B cell (primary cell): ENCODE measurements at regions of chr5 and their contacts with region 1.

Region 1: GRCh38 chr5:139422307-139422893 is 16.9 kb downstream of the DNAJC18 start:
- DNase-seq: peak; percentile 80
- ATAC-seq: peak; percentile 95
- H3K4me3 ChIP-seq: no peak overlapping the region
- H3K4me3 Mint-ChIP-seq: no peak overlapping the region
- H3K27ac ChIP-seq: no peak overlapping the region
- H3K27ac Mint-ChIP-seq: peak overlapping the region; percentile 38
- H3K4me1 ChIP-seq: no peaks in the 10 kb centered on the region
- H3K4me1 Mint-ChIP-seq: peaks cover 2% of the 10 kb centered on the region
- H3K27me3 ChIP-seq: no peaks in the 10 kb centered on the region
- H3K27me3 Mint-ChIP-seq: no peaks in the 10 kb centered on the region
- CTCF ChIP-seq: peak; percentile 88

Region 2: DNA sequence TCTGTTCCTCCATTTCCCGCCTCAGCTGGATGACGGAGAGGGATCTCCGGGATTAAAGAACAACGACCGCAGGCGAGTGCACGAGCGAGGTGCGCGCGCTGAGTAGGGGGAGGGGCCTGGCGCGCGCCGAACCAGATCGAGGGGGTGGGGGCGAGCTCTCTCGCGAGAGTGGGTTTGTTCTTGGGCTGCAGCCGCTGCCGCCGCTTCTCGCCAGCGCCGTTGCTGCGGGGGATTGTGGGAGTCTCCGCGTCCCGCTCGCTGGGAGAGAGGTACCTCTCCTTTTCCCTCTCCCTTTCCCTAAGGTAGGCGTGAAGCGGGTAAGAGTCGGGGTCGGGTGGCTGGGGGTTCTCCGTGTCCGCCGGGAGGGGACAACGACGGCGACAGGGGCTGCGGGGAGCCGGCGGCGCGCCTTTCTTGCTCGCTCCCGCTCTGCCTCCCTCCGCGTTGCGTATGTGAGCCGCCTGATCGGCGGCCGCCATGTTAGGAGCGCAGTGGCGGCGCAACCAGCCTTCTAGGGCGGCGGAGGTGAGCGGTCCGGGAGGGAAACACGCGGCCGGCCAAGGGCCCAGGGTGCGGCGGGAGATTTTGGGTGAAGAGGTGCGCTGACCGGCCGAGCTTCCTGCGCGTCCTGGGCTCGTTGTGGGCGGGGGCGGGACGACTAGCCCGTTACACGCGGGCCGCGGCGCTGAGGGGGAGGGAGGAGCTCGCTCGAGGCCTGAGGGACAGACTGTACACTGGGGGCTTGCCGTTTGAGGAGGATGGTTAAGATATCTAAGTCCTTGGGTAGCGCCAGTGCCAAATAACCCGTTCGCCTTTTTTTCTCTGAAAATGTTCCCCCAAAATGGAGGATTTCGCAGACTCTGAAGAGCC is 128.7 kb before region 1 on chr5 and contains the start of gene MATR3:
- CTCF ChIA-PET with region 1: interaction called, 10 read pairs
- POLR2A ChIA-PET with region 1: interaction called, 13 read pairs
- intact Hi-C with region 1: no loop called
- DNase-seq: peak; percentile 96
- ATAC-seq: peak; percentile 87
- H3K4me3 ChIP-seq: peak within 1 kb of the TSS; percentile 81 to 97 (median 87)
- H3K4me3 Mint-ChIP-seq: peak within 1 kb of the TSS; percentile 98
- H3K27ac ChIP-seq: peak within 1 kb of the TSS; percentile 94 to 99
- H3K27ac Mint-ChIP-seq: peak within 1 kb of the TSS; percentile 99
- H3K4me1 ChIP-seq: peaks cover 35 to 39% of the 10 kb centered on the region in 2 donors
- H3K4me1 Mint-ChIP-seq: peaks cover 44% of the 10 kb centered on the region
- H3K27me3 ChIP-seq: no peaks in the 10 kb centered on the region
- H3K27me3 Mint-ChIP-seq: no peaks in the 10 kb centered on the region
- CTCF ChIP-seq: no peak
- total RNA-seq, gene MATR3: 243 and 271 TPM in 2 replicates

Region 3: GRCh38 chr5:139439013-139439903 is 16.9 kb after region 1 on chr5 and contains the start of gene DNAJC18:
- CTCF ChIA-PET with region 1: interaction called, 7 read pairs
- POLR2A ChIA-PET with region 1: no interaction called
- intact Hi-C with region 1: loop called (anchors 2 kb)
- DNase-seq: peak; percentile 93
- ATAC-seq: peak; percentile 94
- H3K4me3 ChIP-seq: peak within 1 kb of the TSS; percentile 53 to 97 (median 91)
- H3K4me3 Mint-ChIP-seq: peak within 1 kb of the TSS; percentile 97
- H3K27ac ChIP-seq: peak within 1 kb of the TSS; percentile 98 to 100
- H3K27ac Mint-ChIP-seq: peak within 1 kb of the TSS; percentile 99
- H3K4me1 ChIP-seq: peaks cover 11 to 12% of the 10 kb centered on the region in 2 donors
- H3K4me1 Mint-ChIP-seq: peaks cover 16% of the 10 kb centered on the region
- H3K27me3 ChIP-seq: no peaks in the 10 kb centered on the region
- H3K27me3 Mint-ChIP-seq: peaks cover 3% of the 10 kb centered on the region
- CTCF ChIP-seq: no peak
- total RNA-seq, gene DNAJC18: 13.6 and 16.5 TPM in 2 replicates

Region 4: DNA sequence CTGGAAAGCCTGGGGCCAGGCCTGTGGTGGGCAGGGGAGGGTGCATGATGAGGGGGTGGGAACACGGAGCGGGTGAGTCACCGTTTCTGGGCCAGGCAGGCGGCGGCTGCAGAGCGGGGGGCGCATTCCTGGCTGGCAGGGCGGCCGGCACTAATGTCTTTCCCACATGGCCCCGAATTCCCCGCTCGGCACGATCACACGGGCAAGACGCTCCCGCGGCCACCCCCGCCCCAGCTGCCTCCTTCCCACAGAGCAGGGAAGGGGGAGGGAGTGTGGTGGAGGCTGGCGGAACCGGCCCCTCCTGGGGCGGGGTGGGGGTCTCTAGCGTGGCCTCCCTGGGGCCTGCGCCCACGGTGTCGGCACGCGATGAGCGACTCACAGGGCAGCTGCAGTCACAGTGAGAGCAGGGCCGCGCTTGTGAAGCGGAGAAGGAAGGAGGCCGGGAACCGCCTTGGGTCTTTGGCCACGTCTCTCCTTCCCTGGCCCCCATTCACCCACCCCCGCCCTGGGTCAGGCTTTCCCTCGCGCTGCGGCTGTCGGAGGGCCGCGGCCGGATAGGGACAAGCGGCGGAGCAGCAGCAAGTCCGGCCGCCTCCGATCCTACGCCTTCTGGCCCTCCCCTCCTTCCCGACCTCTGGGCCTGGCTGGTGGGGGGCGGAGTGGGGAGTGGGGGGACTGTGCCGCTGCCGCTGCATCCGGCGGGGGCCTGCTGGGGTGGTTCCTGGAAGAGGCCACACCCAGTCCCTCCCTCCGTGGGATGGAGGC is 274.7 kb after region 1 on chr5:
- CTCF ChIA-PET with region 1: interaction called, 3 read pairs
- POLR2A ChIA-PET with region 1: no interaction called
- intact Hi-C with region 1: loop called (anchors 5 kb)
- DNase-seq: peak; percentile 55
- ATAC-seq: peak; percentile 34
- H3K4me3 ChIP-seq: peak overlapping the region in 4 of 5 experiments; percentile 33 to 56 (median 45)
- H3K4me3 Mint-ChIP-seq: peak overlapping the region; percentile 82
- H3K27ac ChIP-seq: no peak overlapping the region
- H3K27ac Mint-ChIP-seq: peak overlapping the region; percentile 72
- H3K4me1 ChIP-seq: peaks cover 41 to 48% of the 10 kb centered on the region in 2 donors
- H3K4me1 Mint-ChIP-seq: peaks cover 45% of the 10 kb centered on the region
- H3K27me3 ChIP-seq: peaks cover 0 to 35% (median 10%) of the 10 kb centered on the region in 4 experiments
- H3K27me3 Mint-ChIP-seq: peaks cover 17% of the 10 kb centered on the region
- CTCF ChIP-seq: no peak

Region 5: GRCh38 chr5:139844472-139845145 is 422.2 kb after region 1 on chr5:
- CTCF ChIA-PET with region 1: interaction called, 5 read pairs
- POLR2A ChIA-PET with region 1: no interaction called
- intact Hi-C with region 1: loop called (anchors 2 kb)
- DNase-seq: peak; percentile 83
- ATAC-seq: peak; percentile 26
- H3K4me3 ChIP-seq: no peak overlapping the region
- H3K4me3 Mint-ChIP-seq: peak overlapping the region; percentile 17
- H3K27ac ChIP-seq: no peak overlapping the region
- H3K27ac Mint-ChIP-seq: peak overlapping the region; percentile 64
- H3K4me1 ChIP-seq: peaks cover 8 to 16% of the 10 kb centered on the region in 2 donors
- H3K4me1 Mint-ChIP-seq: peaks cover 15% of the 10 kb centered on the region
- H3K27me3 ChIP-seq: peaks cover 0 to 36% (median 18%) of the 10 kb centered on the region in 4 experiments
- H3K27me3 Mint-ChIP-seq: peaks cover 30% of the 10 kb centered on the region
- CTCF ChIP-seq: peak; percentile 85

Region 6: GRCh38 chr5:139880416-139881142 is 458.2 kb after region 1 on chr5:
- CTCF ChIA-PET with region 1: no interaction called
- POLR2A ChIA-PET with region 1: interaction called, 12 read pairs
- intact Hi-C with region 1: no loop called
- DNase-seq: no peak
- ATAC-seq: no peak
- H3K4me3 ChIP-seq: no peak overlapping the region
- H3K4me3 Mint-ChIP-seq: no peak overlapping the region
- H3K27ac ChIP-seq: no peak overlapping the region
- H3K27ac Mint-ChIP-seq: no peak overlapping the region
- H3K4me1 ChIP-seq: no peaks in the 10 kb centered on the region
- H3K4me1 Mint-ChIP-seq: no peaks in the 10 kb centered on the region
- H3K27me3 ChIP-seq: peaks cover 0 to 10% (median 2%) of the 10 kb centered on the region in 4 experiments
- H3K27me3 Mint-ChIP-seq: peaks cover 37% of the 10 kb centered on the region
- CTCF ChIP-seq: no peak